Activated naive CD4-positive, alpha-beta T cell treated with anti-CD3 and anti-CD28 coated beads for 36 hours (primary cell): ENCODE measurements at regions of chr1 and their contacts with region 1.

Region 1: GRCh38 chr1:53326088-53326597 is 1.7 kb downstream of the LRP8 start:
- DNase-seq: peak; percentile 96
- H3K4me3 Mint-ChIP-seq: peak overlapping the region; percentile 95
- H3K27ac Mint-ChIP-seq: peak overlapping the region; percentile 94
- H3K4me1 Mint-ChIP-seq: peaks cover 18% of the 10 kb centered on the region
- H3K27me3 Mint-ChIP-seq: no peaks in the 10 kb centered on the region

Region 2: DNA sequence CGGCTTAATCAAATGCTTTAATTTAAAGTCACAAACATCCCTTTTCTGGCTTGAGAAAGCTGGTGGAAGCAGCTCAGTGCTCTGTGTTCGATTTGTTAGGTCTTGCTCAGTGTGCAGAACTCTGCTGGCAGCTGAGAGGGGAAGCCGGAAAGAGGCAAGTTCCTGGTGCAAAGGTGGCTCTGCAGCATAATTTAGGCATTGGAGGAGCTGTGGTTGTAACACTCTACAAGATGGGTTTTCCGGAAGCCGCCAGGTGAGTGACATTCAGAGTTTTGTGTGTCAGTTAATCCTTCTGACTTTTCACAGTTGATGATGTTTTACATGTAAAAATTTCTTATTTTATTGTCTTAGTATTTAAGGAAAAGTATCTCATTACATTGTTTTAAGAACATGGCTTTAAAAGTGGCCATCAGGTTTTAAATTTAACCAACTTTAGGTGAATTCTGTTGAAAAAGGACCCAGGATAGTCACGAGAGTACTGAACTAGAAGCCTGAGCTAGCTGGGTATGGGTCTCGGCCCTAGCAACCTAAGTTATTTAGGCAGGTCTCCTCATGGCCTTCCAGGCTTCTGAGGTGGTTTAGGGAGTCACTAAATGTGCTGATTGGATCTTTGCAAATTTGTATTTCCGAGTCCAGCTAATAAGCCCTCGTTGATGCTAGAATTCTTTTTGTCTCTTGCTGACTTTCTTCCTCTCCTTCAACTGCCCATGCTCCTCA is 311.2 kb before region 1 on chr1:
- CTCF ChIA-PET with region 1: no interaction called
- intact Hi-C with region 1: loop called (anchors 1 kb)
- DNase-seq: peak; percentile 91
- H3K4me3 Mint-ChIP-seq: peak overlapping the region; percentile 78
- H3K27ac Mint-ChIP-seq: peak overlapping the region; percentile 60
- H3K4me1 Mint-ChIP-seq: peaks cover 20% of the 10 kb centered on the region
- H3K27me3 Mint-ChIP-seq: no peaks in the 10 kb centered on the region

Region 3: GRCh38 chr1:53238197-53239155 is 87.7 kb before region 1 on chr1 and contains the start of gene MAGOH:
- CTCF ChIA-PET with region 1: no interaction called
- intact Hi-C with region 1: loop called (anchors 1 kb)
- DNase-seq: peak; percentile 96
- H3K4me3 Mint-ChIP-seq: peak within 1 kb of the TSS; percentile 94
- H3K27ac Mint-ChIP-seq: peak within 1 kb of the TSS; percentile 82
- H3K4me1 Mint-ChIP-seq: peaks cover 28% of the 10 kb centered on the region
- H3K27me3 Mint-ChIP-seq: no peaks in the 10 kb centered on the region
- total RNA-seq, gene MAGOH: 83.7 to 87.2 TPM

Region 4: GRCh38 chr1:53303726-53304515 is 22.2 kb before region 1 on chr1:
- CTCF ChIA-PET with region 1: no interaction called
- intact Hi-C with region 1: no loop called
- DNase-seq: no peak
- H3K4me3 Mint-ChIP-seq: no peak overlapping the region
- H3K27ac Mint-ChIP-seq: no peak overlapping the region
- H3K4me1 Mint-ChIP-seq: no peaks in the 10 kb centered on the region
- H3K27me3 Mint-ChIP-seq: no peaks in the 10 kb centered on the region

Region 5: GRCh38 chr1:53340660-53341520 is 14.7 kb after region 1 on chr1:
- CTCF ChIA-PET with region 1: no interaction called
- intact Hi-C with region 1: loop called (anchors 1 kb)
- DNase-seq: peak; percentile 70
- H3K4me3 Mint-ChIP-seq: no peak overlapping the region
- H3K27ac Mint-ChIP-seq: no peak overlapping the region
- H3K4me1 Mint-ChIP-seq: peaks cover 8% of the 10 kb centered on the region
- H3K27me3 Mint-ChIP-seq: no peaks in the 10 kb centered on the region

Region 6: GRCh38 chr1:53413175-53414001 is 87.2 kb after region 1 on chr1:
- CTCF ChIA-PET with region 1: no interaction called
- intact Hi-C with region 1: loop called (anchors 5 kb)
- DNase-seq: peak; percentile 66
- H3K4me3 Mint-ChIP-seq: no peak overlapping the region
- H3K27ac Mint-ChIP-seq: peak overlapping the region; percentile 79
- H3K4me1 Mint-ChIP-seq: peaks cover 32% of the 10 kb centered on the region
- H3K27me3 Mint-ChIP-seq: no peaks in the 10 kb centered on the region

Region 7: GRCh38 chr1:54052934-54053744 is 727.0 kb after region 1 on chr1 and contains the starts of genes TCEANC2 and TMEM59:
- CTCF ChIA-PET with region 1: no interaction called
- intact Hi-C with region 1: loop called (anchors 1 kb)
- DNase-seq: peak; percentile 99
- H3K4me3 Mint-ChIP-seq: no peak within 1 kb of the TSS
- H3K27ac Mint-ChIP-seq: no peak within 1 kb of the TSS
- H3K4me1 Mint-ChIP-seq: peaks cover 37% of the 10 kb centered on the region
- H3K27me3 Mint-ChIP-seq: no peaks in the 10 kb centered on the region
- total RNA-seq, gene TCEANC2: 13.0 TPM
- total RNA-seq, gene TMEM59: 140 to 142 TPM